ENCODE measurements at regions of chr5 and their contacts with region 1.

Region 1: DNA sequence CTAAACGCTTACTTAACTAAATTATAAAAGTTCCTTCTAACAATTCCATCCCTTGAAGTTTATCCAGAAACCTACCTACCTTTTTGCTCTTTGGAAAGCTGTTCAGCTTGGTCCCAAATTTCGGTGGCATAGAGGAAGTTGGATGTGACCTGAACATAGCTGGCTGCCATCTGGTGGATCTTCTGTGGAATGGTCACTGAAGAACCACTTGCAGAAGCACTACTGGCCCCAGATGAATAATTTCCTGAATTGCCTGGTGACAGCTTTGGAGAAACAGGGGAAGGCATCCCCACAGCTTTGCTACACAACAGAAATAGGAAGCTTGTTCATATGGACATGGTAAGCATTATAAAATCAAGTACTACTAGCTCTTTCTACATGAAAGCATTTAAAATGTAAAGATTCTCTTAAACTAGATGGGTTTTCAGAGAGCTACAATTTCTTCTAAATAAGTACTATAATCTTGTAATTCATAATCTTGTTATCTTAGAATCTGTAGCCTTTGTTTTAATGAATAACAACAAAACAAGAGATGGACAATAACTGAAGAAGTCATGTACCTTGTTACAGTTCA is 9.9 kb downstream of the LEAP2 start:
- DNase-seq: peak; percentile 72
- H3K4me3 ChIP-seq: no peak overlapping the region
- H3K27ac ChIP-seq: no peak overlapping the region
- H3K4me1 ChIP-seq: no peaks in the 10 kb centered on the region
- H3K27me3 ChIP-seq: no peaks in the 10 kb centered on the region
- CTCF ChIP-seq: peak; percentile 72

Region 2: GRCh38 chr5:132386644-132387286 is 496.6 kb before region 1 on chr5:
- CTCF ChIA-PET with region 1: no interaction called
- POLR2A ChIA-PET with region 1: no interaction called
- intact Hi-C with region 1: loop called (anchors 5 kb)
- DNase-seq: peak; percentile 72
- H3K4me3 ChIP-seq: no peak overlapping the region
- H3K27ac ChIP-seq: no peak overlapping the region
- H3K4me1 ChIP-seq: no peaks in the 10 kb centered on the region
- H3K27me3 ChIP-seq: no peaks in the 10 kb centered on the region
- CTCF ChIP-seq: peak; percentile 83

Region 3: GRCh38 chr5:132813599-132814502 is 69.5 kb before region 1 on chr5:
- CTCF ChIA-PET with region 1: no interaction called
- POLR2A ChIA-PET with region 1: no interaction called
- intact Hi-C with region 1: no loop called
- DNase-seq: peak; percentile 40
- H3K4me3 ChIP-seq: peak overlapping the region; percentile 43
- H3K27ac ChIP-seq: no peak overlapping the region
- H3K4me1 ChIP-seq: no peaks in the 10 kb centered on the region
- H3K27me3 ChIP-seq: peaks cover 21% of the 10 kb centered on the region
- CTCF ChIP-seq: no peak

Region 4: DNA sequence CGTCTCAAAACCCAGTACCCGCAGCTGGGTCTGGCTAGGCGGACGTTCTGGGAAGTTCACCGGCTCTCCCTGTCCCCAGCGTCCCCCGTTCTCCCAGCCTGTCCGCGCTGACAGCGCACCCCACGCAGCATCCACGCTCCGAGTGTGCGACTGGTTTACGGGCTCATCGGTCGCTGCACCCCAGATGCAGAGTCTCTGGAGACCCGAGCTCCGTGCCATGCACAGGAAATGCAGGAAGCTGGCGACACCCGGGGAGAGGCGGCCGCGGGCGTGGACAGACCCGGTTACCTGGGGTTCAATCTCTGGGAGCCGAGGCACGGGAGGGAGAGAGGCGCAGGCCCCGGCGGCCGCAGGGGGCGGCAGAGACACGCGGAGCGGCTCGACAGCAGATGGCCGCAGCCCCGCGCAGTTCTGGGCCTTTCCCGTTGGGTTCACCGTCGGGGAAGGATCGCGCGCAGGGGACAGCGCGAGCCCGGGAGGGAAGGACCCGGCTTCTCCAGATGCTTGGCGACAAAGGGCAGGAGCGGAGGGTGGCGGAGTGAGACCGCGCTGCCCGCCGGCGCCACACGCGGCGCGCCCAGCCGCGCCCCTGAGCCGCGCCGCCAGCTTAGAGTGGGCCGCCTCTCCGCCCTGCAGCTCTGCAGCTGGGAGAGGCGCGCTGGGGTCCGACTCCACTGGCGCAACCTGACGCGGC is 53.5 kb before region 1 on chr5:
- CTCF ChIA-PET with region 1: no interaction called
- POLR2A ChIA-PET with region 1: no interaction called
- intact Hi-C with region 1: loop called (anchors 2 kb)
- DNase-seq: peak; percentile 73
- H3K4me3 ChIP-seq: peak overlapping the region; percentile 56
- H3K27ac ChIP-seq: no peak overlapping the region
- H3K4me1 ChIP-seq: peaks cover 2% of the 10 kb centered on the region
- H3K27me3 ChIP-seq: peaks cover 9% of the 10 kb centered on the region
- CTCF ChIP-seq: peak; percentile 85

Region 5: DNA sequence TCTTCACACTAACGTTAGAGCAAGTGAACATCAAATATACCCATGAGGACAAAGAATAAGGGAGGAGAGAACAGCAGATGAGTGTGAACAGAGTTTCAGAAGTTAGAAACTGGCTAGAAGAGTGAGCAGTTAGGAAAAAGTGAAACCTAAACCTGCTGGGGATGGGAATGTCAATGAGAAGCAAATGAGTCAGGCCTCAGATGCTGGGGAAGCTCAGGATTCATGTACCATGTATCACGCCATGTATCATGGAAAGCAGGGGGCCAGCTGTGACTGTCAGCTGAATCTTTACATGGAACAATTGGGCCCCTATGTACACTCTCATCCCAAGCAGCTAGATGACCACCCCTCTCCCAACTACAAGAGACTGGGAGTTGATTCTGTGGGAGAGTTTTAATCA is 33.3 kb before region 1 on chr5:
- CTCF ChIA-PET with region 1: no interaction called
- POLR2A ChIA-PET with region 1: no interaction called
- intact Hi-C with region 1: no loop called
- DNase-seq: no peak
- H3K4me3 ChIP-seq: no peak overlapping the region
- H3K27ac ChIP-seq: no peak overlapping the region
- H3K4me1 ChIP-seq: no peaks in the 10 kb centered on the region
- H3K27me3 ChIP-seq: no peaks in the 10 kb centered on the region
- CTCF ChIP-seq: no peak